Panc1 (cell line): ENCODE measurements at regions of chr5 and their contacts with region 1.

Region 1: GRCh38 chr5:113606298-113607134 is 93.0 kb downstream of the YTHDC2 start:
- DNase-seq: peak; percentile 35
- ATAC-seq: peak; percentile 97
- H3K4me3 ChIP-seq: peak overlapping the region in 1 of 2 experiments; percentile 19; a peak in 2 of 4 replicates
- H3K27ac ChIP-seq: no peak overlapping the region
- H3K4me1 ChIP-seq: no peaks in the 10 kb centered on the region
- H3K27me3 ChIP-seq: no peaks in the 10 kb centered on the region; the same call in 1 of the 2 replicates
- CTCF ChIP-seq: peak; percentile 82

Region 2: DNA sequence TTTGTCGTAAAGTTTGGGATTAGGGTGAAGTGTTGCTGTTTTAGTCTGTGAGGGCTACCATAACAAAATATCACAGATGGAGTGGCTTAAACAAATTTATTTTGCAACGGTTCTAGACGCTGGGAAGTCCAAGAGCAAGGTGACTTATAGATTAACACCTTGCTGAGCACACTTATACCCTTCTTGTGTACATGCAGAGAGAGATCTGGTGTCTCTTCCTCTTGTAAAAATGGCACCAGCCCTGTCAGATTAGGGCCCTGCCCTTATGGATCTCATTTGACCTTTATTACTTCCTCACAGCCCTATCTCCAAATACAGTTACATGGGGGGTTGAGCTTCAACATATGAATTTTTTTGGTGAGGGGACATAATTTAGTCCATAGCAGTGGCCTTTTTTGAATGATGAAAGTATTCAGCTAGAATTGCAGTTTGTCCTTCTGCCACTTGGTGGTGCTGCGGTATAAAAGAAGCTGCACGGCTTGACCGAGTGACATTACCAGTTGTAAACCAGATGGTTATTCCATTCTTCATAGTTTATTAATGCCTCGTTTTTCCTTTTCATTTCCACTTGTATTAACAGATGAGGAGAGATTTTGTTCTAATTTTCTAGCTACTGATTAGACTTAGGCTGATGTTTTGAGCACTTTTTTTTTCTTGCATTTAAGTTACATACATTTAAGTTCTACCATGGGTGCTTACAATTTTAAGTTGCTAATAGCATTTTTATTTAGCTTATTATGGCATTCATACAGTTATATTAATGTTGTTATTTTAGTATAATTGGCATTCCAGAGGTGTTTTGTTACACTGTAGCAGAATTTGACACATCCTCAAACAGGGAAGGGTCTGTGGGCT is 610.5 kb before region 1 on chr5:
- CTCF ChIA-PET with region 1: interaction called, 4 read pairs
- POLR2A ChIA-PET with region 1: no interaction called
- in situ Hi-C with region 1: no loop called
- intact Hi-C with region 1: loop called (anchors 5 kb)
- DNase-seq: no peak
- ATAC-seq: peak; percentile 93
- H3K4me3 ChIP-seq: no peak overlapping the region
- H3K27ac ChIP-seq: no peak overlapping the region
- H3K4me1 ChIP-seq: no peaks in the 10 kb centered on the region; the same call in 1 of the 2 replicates
- H3K27me3 ChIP-seq: no peaks in the 10 kb centered on the region
- CTCF ChIP-seq: peak; percentile 90

Region 3: DNA sequence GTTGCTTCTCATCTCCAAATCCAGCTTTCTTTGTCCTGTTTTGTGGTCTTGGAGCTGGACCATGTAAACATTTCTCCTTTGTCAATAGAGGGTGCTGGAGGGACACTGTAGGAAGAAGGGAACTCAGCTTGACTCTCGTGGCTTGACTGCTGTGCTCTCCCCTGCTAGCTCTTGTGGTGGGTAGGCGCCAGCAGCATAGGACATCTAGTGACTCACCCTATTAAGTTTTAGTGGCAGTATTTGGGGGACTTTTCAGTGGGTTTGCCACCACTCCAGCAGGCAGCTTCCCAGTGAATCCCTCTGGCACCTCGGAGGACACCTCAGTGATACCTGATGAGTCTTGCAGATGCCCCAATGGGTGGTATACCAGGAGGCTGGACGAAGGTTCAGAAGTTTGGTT is 269.5 kb before region 1 on chr5:
- CTCF ChIA-PET with region 1: no interaction called
- POLR2A ChIA-PET with region 1: no interaction called
- in situ Hi-C with region 1: no loop called
- intact Hi-C with region 1: loop called (anchors 5 kb)
- DNase-seq: no peak
- ATAC-seq: peak; percentile 84
- H3K4me3 ChIP-seq: no peak overlapping the region
- H3K27ac ChIP-seq: no peak overlapping the region
- H3K4me1 ChIP-seq: no peaks in the 10 kb centered on the region
- H3K27me3 ChIP-seq: no peaks in the 10 kb centered on the region; the same call in 1 of the 2 replicates
- CTCF ChIP-seq: peak; percentile 58

Region 4: GRCh38 chr5:113378959-113379541 is 227.5 kb before region 1 on chr5:
- CTCF ChIA-PET with region 1: no interaction called
- POLR2A ChIA-PET with region 1: no interaction called
- in situ Hi-C with region 1: no loop called
- intact Hi-C with region 1: loop called (anchors 1 kb)
- DNase-seq: peak; percentile 39
- ATAC-seq: peak; percentile 77
- H3K4me3 ChIP-seq: no peak overlapping the region
- H3K27ac ChIP-seq: no peak overlapping the region
- H3K4me1 ChIP-seq: no peaks in the 10 kb centered on the region
- H3K27me3 ChIP-seq: no peaks in the 10 kb centered on the region
- CTCF ChIP-seq: peak; percentile 86

Region 5: DNA sequence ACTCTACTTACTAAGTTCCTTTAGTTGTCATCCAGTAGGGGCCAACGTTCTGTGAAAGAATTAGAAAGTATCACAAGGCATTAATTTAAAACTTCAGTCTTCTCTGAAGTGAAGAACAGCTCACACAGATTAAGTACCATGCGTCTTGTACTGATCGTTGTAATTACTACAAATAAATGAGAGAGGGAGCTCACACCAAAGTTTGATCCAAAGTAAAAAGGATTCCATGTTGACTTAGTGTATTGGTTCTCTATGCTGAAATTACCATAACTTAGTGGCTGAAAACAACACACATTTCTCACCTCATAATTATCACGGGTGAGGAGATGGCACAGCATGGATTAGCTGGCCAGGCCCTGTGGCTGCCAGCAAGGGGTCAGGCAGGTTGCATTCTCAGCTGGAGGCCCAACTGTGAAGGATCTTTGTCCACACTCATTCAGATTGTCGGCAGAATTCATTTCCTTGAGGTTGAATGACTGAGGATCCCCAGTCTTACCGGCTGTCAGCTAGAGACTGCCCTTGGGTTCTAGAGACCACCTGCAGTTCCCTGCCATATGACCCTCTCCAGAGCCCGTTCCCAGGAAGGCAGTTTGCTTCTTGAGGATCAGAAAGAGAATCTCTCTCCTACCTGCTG is 76.1 kb after region 1 on chr5:
- CTCF ChIA-PET with region 1: no interaction called
- POLR2A ChIA-PET with region 1: no interaction called
- in situ Hi-C with region 1: no loop called
- intact Hi-C with region 1: no loop called
- DNase-seq: no peak
- ATAC-seq: no peak
- H3K4me3 ChIP-seq: no peak overlapping the region
- H3K27ac ChIP-seq: no peak overlapping the region
- H3K4me1 ChIP-seq: no peaks in the 10 kb centered on the region
- H3K27me3 ChIP-seq: no peaks in the 10 kb centered on the region
- CTCF ChIP-seq: peak; percentile 20; the same call in 1 of the 2 replicates